Activated naive CD8-positive, alpha-beta T cell treated with anti-CD3 and anti-CD28 coated beads, Interleukin-2, amount 10 ng/mL, durations not matched to agents 7 days and 5 days (primary cell): ENCODE measurements at regions of chr12 and their contacts with region 1.

Region 1: GRCh38 chr12:109910969-109911348 is 10.9 kb downstream of the TCHP start:
- DNase-seq: no peak
- ATAC-seq: peak; percentile 27
- H3K4me3 Mint-ChIP-seq: no peak overlapping the region
- H3K27ac Mint-ChIP-seq: no peak overlapping the region
- H3K4me1 Mint-ChIP-seq: peaks cover 2% of the 10 kb centered on the region
- H3K27me3 Mint-ChIP-seq: no peaks in the 10 kb centered on the region

Region 2: DNA sequence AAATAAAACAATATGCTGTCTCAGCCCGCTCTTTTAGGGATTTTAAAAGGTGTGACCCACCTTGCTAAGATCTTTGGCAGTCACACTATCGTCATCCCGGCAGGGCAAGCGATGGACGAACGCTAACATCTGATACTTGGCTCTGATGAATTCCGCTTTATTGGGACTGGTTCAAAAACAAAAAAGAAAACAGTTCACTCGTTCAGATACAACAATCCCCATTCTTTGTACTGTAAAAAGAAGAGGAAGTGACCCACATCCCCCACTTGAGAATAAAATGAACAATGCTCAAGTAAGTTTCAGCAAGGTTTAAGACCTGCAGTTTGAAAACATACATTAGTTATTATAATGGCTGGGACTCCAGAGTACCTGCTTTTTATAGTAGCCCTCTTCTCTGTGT is 77.9 kb after region 1 on chr12:
- POLR2A ChIA-PET with region 1: interaction called, 10 read pairs
- DNase-seq: no peak
- ATAC-seq: no peak
- H3K4me3 Mint-ChIP-seq: no peak overlapping the region
- H3K27ac Mint-ChIP-seq: no peak overlapping the region
- H3K4me1 Mint-ChIP-seq: peaks cover 21% of the 10 kb centered on the region
- H3K27me3 Mint-ChIP-seq: no peaks in the 10 kb centered on the region